ENCODE measurements at regions of chr12 and their contacts with region 1.

Region 1: DNA sequence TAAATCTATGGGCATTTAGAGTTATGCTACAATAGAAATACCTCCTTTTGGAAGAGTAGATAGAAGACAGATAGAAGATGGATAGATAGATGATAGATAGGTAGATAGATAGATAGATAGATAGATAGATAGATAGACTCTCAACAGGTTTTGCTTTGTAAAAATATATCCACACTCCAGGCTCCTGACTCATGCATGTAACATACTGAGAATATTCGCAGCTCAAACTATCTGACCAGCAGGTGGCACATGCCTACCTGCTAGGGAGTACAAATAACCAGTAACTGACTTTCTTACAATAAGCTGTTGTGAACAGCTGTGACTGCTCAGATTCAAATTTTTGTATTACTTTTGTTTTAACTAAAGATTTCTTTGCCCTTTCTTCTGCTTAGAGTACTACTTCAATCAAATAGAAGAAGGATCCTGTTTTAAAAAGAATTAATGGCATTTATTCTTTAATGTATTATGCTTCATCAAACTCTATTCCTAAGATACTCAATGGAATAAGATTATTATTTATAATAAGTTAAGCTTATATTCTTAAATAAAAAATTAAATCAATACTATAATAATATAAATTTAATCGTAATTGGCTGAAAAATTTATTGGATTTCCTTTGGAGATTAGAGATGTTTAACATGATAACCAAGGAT is 15.8 kb upstream of the CPNE8 start:
- DNase-seq: peak; percentile 23
- CTCF ChIP-seq: peak; percentile 53

Region 2: DNA sequence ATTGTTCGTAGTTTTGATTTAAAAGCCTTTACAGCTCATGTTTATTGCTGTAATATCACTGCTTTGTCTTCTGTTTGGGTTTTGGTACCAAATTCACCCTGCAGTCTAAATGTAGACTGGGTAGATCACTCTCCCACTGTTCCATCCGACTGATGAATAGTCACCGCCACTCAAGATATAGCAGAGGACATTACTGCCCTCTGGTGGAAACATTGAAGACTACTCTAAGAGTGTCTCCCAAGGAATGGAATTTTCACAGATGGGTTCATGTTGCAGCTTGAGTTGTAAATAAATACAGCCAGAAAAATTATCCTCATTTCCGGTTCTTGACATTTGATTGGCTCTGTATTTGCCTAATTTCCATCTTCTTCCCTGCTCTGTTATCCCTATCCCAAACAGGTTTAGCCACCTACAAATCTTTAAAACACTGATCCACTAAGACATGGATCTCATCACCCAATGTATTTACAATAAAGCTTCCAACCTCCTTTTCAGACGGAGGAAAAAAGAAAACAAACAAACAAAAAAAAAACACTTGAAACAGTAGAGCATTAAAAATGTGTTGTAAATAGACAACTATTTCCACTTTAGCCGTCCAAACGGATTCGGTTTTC is 182.5 kb after region 1 on chr12:
- CTCF ChIA-PET with region 1: interaction called, 33 read pairs
- POLR2A ChIA-PET with region 1: no interaction called
- DNase-seq: peak; percentile 63
- CTCF ChIP-seq: peak; percentile 63